ENCODE measurements at regions of chr3 and their contacts with region 1.

Region 1: DNA sequence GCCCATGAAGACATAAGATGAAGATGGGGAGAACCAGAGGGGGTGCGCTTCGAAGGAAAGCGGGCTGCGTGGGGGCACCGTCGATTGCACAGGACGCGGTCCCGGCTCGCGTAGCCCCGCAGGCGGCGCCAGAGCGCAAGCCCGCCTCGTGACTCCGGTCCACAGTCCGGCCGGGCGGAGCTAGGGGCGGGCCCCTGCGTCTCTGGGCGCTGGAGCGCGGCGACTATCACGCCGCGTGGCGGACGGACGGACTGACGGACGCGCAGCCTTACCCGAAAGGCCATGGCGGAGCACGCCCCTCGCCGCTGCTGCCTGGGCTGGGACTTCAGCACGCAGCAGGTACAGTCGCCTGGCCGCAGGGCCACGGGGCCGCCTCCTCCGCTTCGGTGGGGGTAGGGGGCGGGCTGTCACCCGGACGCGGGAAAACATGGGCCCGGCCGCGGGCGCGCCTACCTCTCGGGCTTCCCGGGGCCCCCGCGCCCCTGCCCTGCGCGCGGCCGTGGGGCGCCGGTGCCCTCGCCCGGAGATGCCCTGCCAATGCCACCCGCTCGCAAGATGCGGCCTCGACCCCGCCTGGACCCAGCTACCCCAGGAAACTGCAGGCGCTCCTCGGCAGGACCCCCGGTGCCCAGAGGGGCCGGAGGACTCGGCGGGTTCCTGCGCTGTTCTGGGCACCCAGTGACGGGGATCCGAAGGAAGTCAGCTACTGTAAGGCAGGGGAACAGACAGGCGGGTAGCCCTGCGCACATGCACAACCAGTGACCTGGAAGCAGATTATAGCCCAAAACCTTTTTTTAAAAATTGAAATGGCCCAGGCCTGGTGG is at the start of gene XYLB:
- DNase-seq: peak; percentile 84
- H3K4me3 Mint-ChIP-seq: peak within 1 kb of the TSS; percentile 71
- H3K27ac Mint-ChIP-seq: no peak within 1 kb of the TSS
- H3K4me1 Mint-ChIP-seq: peaks cover 6% of the 10 kb centered on the region
- H3K27me3 Mint-ChIP-seq: no peaks in the 10 kb centered on the region
- total RNA-seq, gene XYLB: 4.8 to 4.9 TPM

Region 2: GRCh38 chr3:38117748-38118420 is 228.9 kb before region 1 on chr3:
- CTCF ChIA-PET with region 1: interaction called, 41 read pairs
- POLR2A ChIA-PET with region 1: no interaction called
- intact Hi-C with region 1: loop called (anchors 5 kb)
- DNase-seq: peak; percentile 85
- H3K4me3 Mint-ChIP-seq: no peak overlapping the region
- H3K27ac Mint-ChIP-seq: no peak overlapping the region
- H3K4me1 Mint-ChIP-seq: no peaks in the 10 kb centered on the region
- H3K27me3 Mint-ChIP-seq: no peaks in the 10 kb centered on the region

Region 3: GRCh38 chr3:38374221-38374620 is 27.4 kb after region 1 on chr3:
- CTCF ChIA-PET with region 1: no interaction called
- POLR2A ChIA-PET with region 1: no interaction called
- intact Hi-C with region 1: no loop called
- DNase-seq: peak; percentile 54
- H3K4me3 Mint-ChIP-seq: no peak overlapping the region
- H3K27ac Mint-ChIP-seq: no peak overlapping the region
- H3K4me1 Mint-ChIP-seq: peaks cover 24% of the 10 kb centered on the region
- H3K27me3 Mint-ChIP-seq: no peaks in the 10 kb centered on the region

Region 4: GRCh38 chr3:38453075-38453912 is 106.5 kb after region 1 on chr3 and contains the start of gene ACVR2B:
- CTCF ChIA-PET with region 1: interaction called, 5 read pairs
- POLR2A ChIA-PET with region 1: interaction called, 4 read pairs
- intact Hi-C with region 1: loop called (anchors 2 kb)
- DNase-seq: peak; percentile 82
- H3K4me3 Mint-ChIP-seq: peak within 1 kb of the TSS; percentile 96
- H3K27ac Mint-ChIP-seq: peak within 1 kb of the TSS; percentile 70
- H3K4me1 Mint-ChIP-seq: peaks cover 2% of the 10 kb centered on the region
- H3K27me3 Mint-ChIP-seq: no peaks in the 10 kb centered on the region
- total RNA-seq, gene ACVR2B: 7.1 to 7.8 TPM